Pancreas (tissue), 10 donors: ENCODE measurements at regions of chr19 and their contacts with region 1.

Region 1: DNA sequence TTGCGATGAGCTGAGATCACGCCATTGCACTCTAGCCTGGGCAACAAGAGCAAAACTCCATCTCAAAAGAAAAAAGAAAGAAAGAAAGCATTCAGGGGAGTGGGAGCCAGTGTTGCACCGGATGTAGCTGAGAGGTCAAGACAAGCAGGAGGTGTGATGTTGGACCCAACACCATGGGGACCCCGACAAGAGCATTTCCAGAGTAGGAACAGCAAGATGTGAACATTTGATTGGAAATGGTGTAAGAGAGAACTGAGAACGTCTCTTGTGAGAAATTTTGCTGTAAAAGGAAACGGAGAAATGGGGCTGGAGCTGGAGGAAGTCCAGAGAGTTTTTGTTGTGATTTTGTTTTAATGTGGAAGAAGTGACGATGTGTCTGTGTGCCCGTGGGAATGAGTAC is 15.8 kb upstream of the DPF1 start:
- DNase-seq: no peak
- ATAC-seq: no peak
- H3K4me3 ChIP-seq: no peak overlapping the region
- H3K27ac ChIP-seq: no peak overlapping the region
- H3K4me1 ChIP-seq: no peaks in the 10 kb centered on the region
- H3K27me3 ChIP-seq: no peaks in the 10 kb centered on the region
- CTCF ChIP-seq: no peak

Region 2: GRCh38 chr19:38122402-38123093 is 117.3 kb before region 1 on chr19:
- intact Hi-C with region 1: no loop called
- DNase-seq: no peak
- ATAC-seq: peak in 2 of 4 donors; percentile 44 to 59
- H3K4me3 ChIP-seq: no peak overlapping the region
- H3K27ac ChIP-seq: no peak overlapping the region
- H3K4me1 ChIP-seq: no peaks in the 10 kb centered on the region
- H3K27me3 ChIP-seq: no peaks in the 10 kb centered on the region
- CTCF ChIP-seq: no peak

Region 3: DNA sequence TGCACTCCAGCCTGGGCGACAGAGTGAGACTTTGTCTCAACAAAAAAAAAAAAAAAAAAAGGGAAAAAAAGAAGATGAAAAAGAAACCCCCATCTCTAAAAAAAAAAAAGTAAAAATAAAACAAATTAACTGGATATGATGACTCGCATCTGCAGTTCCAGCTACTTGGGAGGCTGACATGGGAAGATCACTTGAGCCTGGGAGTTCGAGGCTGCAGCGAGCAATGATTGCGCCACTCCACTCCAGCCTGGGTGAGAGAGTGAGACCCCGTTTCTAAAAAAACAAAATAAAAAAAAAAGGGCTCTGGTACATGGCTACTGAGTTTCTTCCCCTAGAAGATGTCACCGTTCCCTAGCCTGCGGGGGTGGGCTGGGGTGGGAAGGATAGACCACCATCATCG is 93.4 kb after region 1 on chr19:
- intact Hi-C with region 1: loop called (anchors 5 to 10 kb)
- DNase-seq: no peak
- ATAC-seq: no peak
- H3K4me3 ChIP-seq: no peak overlapping the region
- H3K27ac ChIP-seq: no peak overlapping the region
- H3K4me1 ChIP-seq: no peaks in the 10 kb centered on the region
- H3K27me3 ChIP-seq: no peaks in the 10 kb centered on the region
- CTCF ChIP-seq: no peak